ENCODE measurements at regions of chr11 and their contacts with region 1.

Region 1: GRCh38 chr11:101963236-101963635 is 46.9 kb upstream of the ANGPTL5 start:
- DNase-seq: no peak
- ATAC-seq: no peak
- H3K4me3 ChIP-seq: no peak overlapping the region
- H3K4me1 ChIP-seq: no peaks in the 10 kb centered on the region
- CTCF ChIP-seq: no peak

Region 2: GRCh38 chr11:101894505-101894904 is 68.7 kb before region 1 on chr11:
- intact Hi-C with region 1: loop called in 1 of 2 experiments (anchors 5 kb)
- DNase-seq: no peak
- ATAC-seq: no peak
- H3K4me3 ChIP-seq: no peak overlapping the region
- H3K4me1 ChIP-seq: no peaks in the 10 kb centered on the region
- CTCF ChIP-seq: no peak